ENCODE measurements at regions of chr1 and their contacts with region 1.

Region 1: DNA sequence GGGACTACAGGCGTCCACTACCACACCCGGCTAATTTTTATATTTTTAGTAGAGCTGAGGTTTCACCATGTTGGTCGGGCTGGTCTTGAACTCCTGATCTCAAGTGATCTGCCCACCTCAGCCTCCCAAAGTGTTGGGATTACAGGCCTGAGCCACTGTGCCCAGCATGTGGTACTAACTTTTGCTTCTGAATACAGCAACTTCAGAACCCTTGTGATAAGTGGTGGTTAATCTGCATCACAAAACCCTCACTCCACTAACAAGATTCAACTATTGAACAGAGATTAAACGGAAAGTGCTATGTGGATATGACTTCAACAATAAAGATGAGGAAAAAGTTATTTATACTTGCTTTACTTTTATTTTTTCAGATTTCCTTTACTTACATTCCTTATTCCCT is 44.5 kb downstream of the SLC16A1 start:
- DNase-seq: no peak

Region 2: DNA sequence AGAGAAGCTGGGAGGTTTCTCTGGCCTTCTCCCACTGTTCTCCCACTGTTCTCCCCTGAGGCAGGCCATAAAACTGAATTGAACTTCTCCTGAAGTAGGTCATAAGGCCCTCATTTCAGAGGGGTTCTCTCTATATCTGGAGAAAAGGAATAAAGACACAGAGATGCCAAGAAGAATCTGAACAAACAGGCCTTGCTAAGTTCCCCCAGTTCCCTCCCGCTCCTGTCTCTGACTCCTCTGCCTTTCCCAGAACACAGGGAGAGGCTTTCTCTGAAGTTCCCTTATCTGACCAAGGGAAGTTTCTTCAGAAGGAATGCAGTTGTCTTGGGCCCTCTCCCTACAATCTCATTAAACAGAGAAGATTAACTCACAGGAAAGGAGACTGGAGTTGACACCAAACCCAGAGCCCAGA is 38.9 kb before region 1 on chr1:
- intact Hi-C with region 1: loop called in 1 of 2 experiments (anchors 2 kb)
- DNase-seq: no peak

Measured in posterior vena cava (tissue), 2 donors.